Activated CD4-positive, alpha-beta memory T cell treated with anti-CD3 and anti-CD28 coated beads for 36 hours (primary cell): ENCODE measurements at regions of chr2 and their contacts with region 1.

Region 1: GRCh38 chr2:74391580-74392448 is 11.7 kb upstream of the DCTN1 start:
- DNase-seq: peak; percentile 95
- H3K4me3 Mint-ChIP-seq: peak overlapping the region; percentile 92
- H3K27ac Mint-ChIP-seq: peak overlapping the region; percentile 96
- H3K4me1 Mint-ChIP-seq: peaks cover 4% of the 10 kb centered on the region
- H3K27me3 Mint-ChIP-seq: no peaks in the 10 kb centered on the region

Region 2: DNA sequence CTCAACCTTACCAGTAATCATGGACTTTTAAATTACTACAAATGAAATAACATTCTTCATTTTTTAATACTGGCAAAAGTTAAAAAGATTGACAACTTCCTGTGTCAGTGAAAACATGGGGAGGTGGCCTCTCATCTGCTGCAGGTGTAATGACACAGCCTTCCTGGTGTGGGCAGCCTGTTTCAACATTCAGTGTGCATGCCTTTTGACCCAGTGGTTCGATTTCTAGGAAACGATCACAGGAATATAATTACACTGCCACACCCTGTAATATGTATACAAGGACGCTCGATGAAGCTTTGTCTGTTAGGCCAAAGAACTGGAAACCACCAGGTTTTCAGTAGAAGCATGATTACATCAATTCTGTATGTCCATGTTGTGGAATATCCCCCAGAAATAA is 124.7 kb before region 1 on chr2:
- CTCF ChIA-PET with region 1: interaction called, 6 read pairs
- POLR2A ChIA-PET with region 1: interaction called, 3 read pairs
- intact Hi-C with region 1: loop called (anchors 1 kb)
- DNase-seq: peak; percentile 78
- H3K4me3 Mint-ChIP-seq: peak overlapping the region; percentile 17
- H3K27ac Mint-ChIP-seq: peak overlapping the region; percentile 52
- H3K4me1 Mint-ChIP-seq: peaks cover 9% of the 10 kb centered on the region
- H3K27me3 Mint-ChIP-seq: no peaks in the 10 kb centered on the region

Region 3: GRCh38 chr2:74414881-74415761 is 23.3 kb after region 1 on chr2:
- CTCF ChIA-PET with region 1: interaction called, 10 read pairs
- POLR2A ChIA-PET with region 1: no interaction called
- intact Hi-C with region 1: no loop called
- DNase-seq: peak; percentile 38
- H3K4me3 Mint-ChIP-seq: peak overlapping the region; percentile 58
- H3K27ac Mint-ChIP-seq: no peak overlapping the region
- H3K4me1 Mint-ChIP-seq: peaks cover 4% of the 10 kb centered on the region
- H3K27me3 Mint-ChIP-seq: peaks cover 10% of the 10 kb centered on the region

Region 4: GRCh38 chr2:74421221-74421870 is 29.5 kb after region 1 on chr2 and contains the starts of genes C2orf81 and WDR54:
- CTCF ChIA-PET with region 1: interaction called, 10 read pairs
- POLR2A ChIA-PET with region 1: interaction called, 8 read pairs
- intact Hi-C with region 1: loop called (anchors 1 kb)
- DNase-seq: peak; percentile 96
- H3K4me3 Mint-ChIP-seq: peak within 1 kb of the TSS; percentile 95
- H3K27ac Mint-ChIP-seq: peak within 1 kb of the TSS; percentile 92
- H3K4me1 Mint-ChIP-seq: peaks cover 21% of the 10 kb centered on the region
- H3K27me3 Mint-ChIP-seq: no peaks in the 10 kb centered on the region
- total RNA-seq, gene C2orf81: 2.4 to 2.8 TPM
- total RNA-seq, gene WDR54: 101 TPM